Naive thymus-derived CD4-positive, alpha-beta T cell (primary cell): ENCODE measurements at regions of chr6 and their contacts with region 1.

Region 1: DNA sequence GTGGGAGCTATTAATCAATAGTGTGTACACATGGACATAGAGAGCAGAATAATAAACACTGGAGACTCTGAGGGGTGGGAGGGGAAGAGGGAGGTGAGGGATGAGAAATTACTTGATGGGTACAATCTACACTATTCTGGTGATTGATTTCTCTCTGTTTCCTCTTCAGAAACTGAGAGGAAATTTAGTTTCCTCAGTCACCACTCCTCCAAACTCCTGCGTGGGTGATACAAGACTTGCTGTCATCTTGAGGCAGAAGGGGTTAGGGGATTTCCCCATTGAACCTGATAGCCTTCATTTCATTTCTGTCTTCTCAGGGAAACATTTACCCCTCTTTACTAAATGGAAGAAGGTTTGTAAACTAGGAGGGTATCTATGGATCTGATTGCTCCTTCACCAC is 84.3 kb upstream of the ESR1 start:
- DNase-seq: peak in 7 of 9 donors; percentile 9 to 61 (median 37)
- ATAC-seq: peak; percentile 63
- H3K4me3 ChIP-seq: no peak overlapping the region
- H3K4me3 Mint-ChIP-seq: peak overlapping the region in 2 of 10 donors; percentile 28 to 33
- H3K27ac ChIP-seq: no peak overlapping the region
- H3K27ac Mint-ChIP-seq: peak overlapping the region in 7 of 9 donors; percentile 5 to 83 (median 61)
- H3K4me1 ChIP-seq: peaks cover 0 to 4% of the 10 kb centered on the region in 2 donors
- H3K4me1 Mint-ChIP-seq: peaks cover 0 to 57% (median 29%) of the 10 kb centered on the region in 7 donors
- H3K27me3 ChIP-seq: no peaks in the 10 kb centered on the region
- H3K27me3 Mint-ChIP-seq: peaks cover 0 to 7% (median 0%) of the 10 kb centered on the region in 5 donors

Region 2: DNA sequence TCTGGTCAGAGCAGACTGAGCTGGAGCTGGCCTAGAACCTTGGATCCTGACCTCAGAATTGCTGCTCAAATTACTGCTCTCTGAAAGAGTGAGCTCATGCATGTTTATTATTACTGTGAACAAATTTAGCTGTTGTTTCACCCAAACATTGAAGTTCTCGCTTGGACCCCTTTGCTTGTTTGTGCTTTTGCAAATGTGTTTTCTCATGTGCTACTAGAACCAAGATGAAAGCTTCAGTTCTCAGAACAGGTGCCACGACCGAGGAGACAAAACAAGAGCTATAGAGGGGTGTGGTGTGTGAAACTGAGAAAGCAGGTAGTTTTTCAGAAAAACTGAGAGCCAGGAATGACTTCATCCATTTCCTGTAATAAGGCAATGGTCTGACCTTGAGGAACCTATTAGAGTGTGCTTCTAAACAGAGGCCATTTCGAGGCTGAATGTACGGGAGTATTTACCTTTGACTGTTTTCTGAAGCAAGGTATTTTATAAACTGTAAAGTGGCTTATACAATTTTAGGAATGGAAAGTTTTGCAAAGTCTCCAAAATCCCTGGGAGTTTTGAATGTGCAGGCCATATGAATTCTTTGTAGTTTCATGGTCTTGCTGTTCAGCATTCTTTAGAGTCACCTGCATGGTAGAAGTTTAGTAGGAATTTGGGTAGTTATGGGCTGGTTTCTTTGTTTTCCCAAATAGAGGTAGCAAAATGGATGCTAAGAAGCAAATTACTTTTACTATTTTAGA is 34.5 kb after region 1 on chr6:
- CTCF ChIA-PET with region 1: no interaction called
- POLR2A ChIA-PET with region 1: no interaction called
- intact Hi-C with region 1: loop called in 1 of 2 experiments (anchors 1 kb)
- DNase-seq: peak in 4 of 9 donors; percentile 10 to 30 (median 19)
- ATAC-seq: peak; percentile 44
- H3K4me3 ChIP-seq: no peak overlapping the region
- H3K4me3 Mint-ChIP-seq: peak overlapping the region in 8 of 10 donors; percentile 6 to 66 (median 32)
- H3K27ac ChIP-seq: peak overlapping the region; percentile 23
- H3K27ac Mint-ChIP-seq: peak overlapping the region; percentile 49 to 98 (median 84)
- H3K4me1 ChIP-seq: peaks cover 6 to 13% of the 10 kb centered on the region in 2 donors
- H3K4me1 Mint-ChIP-seq: peaks cover 10 to 50% (median 25%) of the 10 kb centered on the region in 7 donors
- H3K27me3 ChIP-seq: no peaks in the 10 kb centered on the region
- H3K27me3 Mint-ChIP-seq: peaks cover 0 to 3% (median 0%) of the 10 kb centered on the region in 5 donors